Heart right ventricle (tissue), 16 donors: ENCODE measurements at regions of chr21 and their contacts with region 1.

Region 1: GRCh38 chr21:38903690-38904139 is 98.0 kb downstream of the ETS2 start:
- DNase-seq: no peak
- ATAC-seq: peak in 4 of 8 donors; percentile 13 to 75 (median 34)
- H3K4me3 ChIP-seq: no peak overlapping the region
- H3K27ac ChIP-seq: peak overlapping the region; percentile 15 to 84 (median 72)
- H3K4me1 ChIP-seq: peaks cover 15 to 40% (median 26%) of the 10 kb centered on the region in 9 donors
- H3K27me3 ChIP-seq: no peaks in the 10 kb centered on the region
- CTCF ChIP-seq: no peak

Region 2: DNA sequence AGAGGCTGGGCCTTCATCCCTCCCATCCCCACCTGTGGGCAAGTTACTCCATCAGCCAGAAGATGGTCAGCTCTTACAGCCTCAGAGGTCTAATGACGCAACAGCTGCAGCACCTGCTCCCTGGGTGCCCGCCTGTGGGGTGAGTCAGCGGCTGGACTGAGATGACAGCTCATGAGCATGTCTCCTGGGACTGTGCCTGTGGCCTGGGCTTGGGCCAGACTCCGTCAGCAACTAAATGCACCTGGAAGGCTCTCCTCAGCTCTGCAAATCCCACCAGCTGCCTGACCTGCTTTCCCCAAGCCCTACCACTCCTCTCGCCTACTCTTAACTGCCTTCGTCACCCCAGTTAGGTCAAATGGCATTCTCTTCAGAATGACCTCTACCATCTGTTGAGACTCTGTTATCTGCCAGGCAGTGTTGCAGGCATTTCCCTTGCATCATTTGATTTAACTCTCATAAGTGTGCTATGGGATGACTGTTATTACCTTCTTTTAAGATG is 50.2 kb before region 1 on chr21:
- intact Hi-C with region 1: loop called in 2 of 10 experiments (anchors 5 to 10 kb)
- DNase-seq: peak in 1 of 2 donors; percentile 27
- ATAC-seq: peak in 5 of 8 donors; percentile 38 to 83 (median 64)
- H3K4me3 ChIP-seq: no peak overlapping the region
- H3K27ac ChIP-seq: no peak overlapping the region
- H3K4me1 ChIP-seq: peaks cover 0 to 37% (median 27%) of the 10 kb centered on the region in 9 donors
- H3K27me3 ChIP-seq: no peaks in the 10 kb centered on the region
- CTCF ChIP-seq: no peak

Region 3: DNA sequence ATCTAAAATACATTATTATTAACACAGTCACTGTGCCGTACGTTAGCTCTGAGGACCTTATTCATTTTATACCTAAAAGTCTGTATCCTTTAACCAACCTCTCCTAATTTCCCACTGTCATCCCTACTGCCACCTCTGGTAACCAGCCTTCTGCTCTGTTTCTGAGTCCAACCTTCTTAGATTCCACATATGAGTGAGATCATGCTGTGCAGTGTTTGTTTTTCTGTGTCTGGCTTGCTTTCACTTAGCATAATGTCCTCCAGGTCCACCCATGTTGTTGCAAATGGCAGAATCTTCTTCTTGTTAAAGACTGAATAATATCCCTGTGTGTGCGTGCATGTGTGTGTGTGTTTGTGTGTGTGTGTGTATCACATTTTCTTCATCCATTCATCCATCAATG is 33.8 kb before region 1 on chr21:
- intact Hi-C with region 1: no loop called
- DNase-seq: no peak
- ATAC-seq: no peak
- H3K4me3 ChIP-seq: no peak overlapping the region
- H3K27ac ChIP-seq: no peak overlapping the region
- H3K4me1 ChIP-seq: peaks cover 0 to 11% (median 0%) of the 10 kb centered on the region in 9 donors
- H3K27me3 ChIP-seq: no peaks in the 10 kb centered on the region
- CTCF ChIP-seq: peak in 1 of 9 donors; percentile 17

Region 4: DNA sequence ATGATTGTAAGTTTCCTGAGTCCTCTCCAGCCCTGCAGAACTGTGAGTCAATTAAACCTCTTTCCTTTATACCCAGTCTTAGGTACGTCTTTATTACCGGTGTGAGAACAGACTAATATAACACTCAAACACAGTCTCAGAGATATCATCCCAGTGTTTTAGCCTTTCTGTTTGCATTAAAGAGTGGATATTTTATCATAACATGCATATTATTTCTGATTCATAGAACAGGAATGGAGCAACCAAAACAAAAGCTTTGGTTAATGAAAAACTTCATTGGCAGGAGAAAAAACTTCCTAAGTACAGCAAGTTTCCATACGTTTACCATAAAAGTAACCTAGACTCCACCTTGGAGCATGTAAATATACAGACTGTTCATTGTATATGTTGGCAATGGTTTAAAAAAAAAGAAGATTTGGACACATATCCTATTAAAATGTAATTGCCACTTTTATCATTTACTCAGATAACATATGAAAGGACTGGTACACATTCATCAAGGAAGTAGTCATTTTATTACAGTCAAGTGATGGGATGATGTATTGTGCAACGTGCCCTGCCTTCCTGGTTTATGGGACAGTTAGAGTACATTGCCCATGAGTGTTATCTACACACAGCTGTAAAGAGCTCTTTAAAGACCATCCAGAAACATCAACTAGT is 46.9 kb after region 1 on chr21:
- intact Hi-C with region 1: no loop called
- DNase-seq: no peak
- ATAC-seq: no peak
- H3K4me3 ChIP-seq: no peak overlapping the region
- H3K27ac ChIP-seq: no peak overlapping the region
- H3K4me1 ChIP-seq: peaks cover 0 to 7% (median under 1%) of the 10 kb centered on the region in 9 donors
- H3K27me3 ChIP-seq: no peaks in the 10 kb centered on the region
- CTCF ChIP-seq: no peak

Region 5: DNA sequence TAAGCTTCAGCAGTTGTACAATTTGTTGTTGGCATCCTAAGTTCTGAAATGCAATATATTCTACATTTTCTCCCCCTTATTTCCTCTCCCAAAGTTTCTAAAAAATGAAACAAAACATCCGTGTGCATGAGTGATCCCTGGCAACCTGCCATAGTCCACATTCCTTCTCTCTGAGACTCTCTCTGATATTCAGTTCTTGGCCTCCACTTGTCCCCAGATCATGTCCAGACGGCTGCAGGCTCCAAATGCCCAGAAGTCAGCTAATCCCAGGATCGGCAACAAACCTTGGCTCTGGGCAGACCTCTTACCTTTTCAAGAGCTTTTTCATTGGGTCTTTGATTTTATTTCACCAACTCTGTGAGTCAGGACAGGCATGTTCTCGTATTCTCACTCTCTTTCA is 89.8 kb after region 1 on chr21:
- intact Hi-C with region 1: loop called in 1 of 10 experiments (anchors 2 kb)
- DNase-seq: peak in 1 of 2 donors; percentile 77
- ATAC-seq: peak in 7 of 8 donors; percentile 24 to 72 (median 43)
- H3K4me3 ChIP-seq: no peak overlapping the region
- H3K27ac ChIP-seq: peak overlapping the region in 9 of 10 donors; percentile 27 to 96 (median 66)
- H3K4me1 ChIP-seq: peaks cover 30 to 100% (median 85%) of the 10 kb centered on the region in 9 donors
- H3K27me3 ChIP-seq: peaks cover 0 to 5% (median 0%) of the 10 kb centered on the region in 7 donors
- CTCF ChIP-seq: no peak

Region 6: GRCh38 chr21:39088831-39089380 is 185.2 kb after region 1 on chr21:
- intact Hi-C with region 1: loop called in 2 of 10 experiments (anchors 5 to 10 kb)
- DNase-seq: peak in 1 of 2 donors; percentile 47
- ATAC-seq: peak in 6 of 8 donors; percentile 34 to 58 (median 47)
- H3K4me3 ChIP-seq: no peak overlapping the region
- H3K27ac ChIP-seq: peak overlapping the region in 7 of 10 donors; percentile 88 to 98 (median 95)
- H3K4me1 ChIP-seq: peaks cover 2 to 59% (median 33%) of the 10 kb centered on the region in 9 donors
- H3K27me3 ChIP-seq: no peaks in the 10 kb centered on the region
- CTCF ChIP-seq: peak in 6 of 9 donors; percentile 10 to 43 (median 28)